ENCODE measurements at regions of chr6 and their contacts with region 1.

Region 1: GRCh38 chr6:53651764-53652401 is 13.7 kb downstream of the KLHL31 start:
- DNase-seq: peak; percentile 92 to 94
- H3K4me3 ChIP-seq: peak overlapping the region; percentile 53
- H3K4me3 Mint-ChIP-seq: peak overlapping the region; percentile 99
- H3K27ac Mint-ChIP-seq: peak overlapping the region; percentile 99
- H3K4me1 ChIP-seq: peaks cover 6% of the 10 kb centered on the region; the same call in 1 of the 2 replicates
- H3K4me1 Mint-ChIP-seq: peaks cover 10% of the 10 kb centered on the region
- H3K27me3 ChIP-seq: no peaks in the 10 kb centered on the region
- H3K27me3 Mint-ChIP-seq: no peaks in the 10 kb centered on the region
- CTCF ChIP-seq: peak; percentile 49 to 54

Region 2: DNA sequence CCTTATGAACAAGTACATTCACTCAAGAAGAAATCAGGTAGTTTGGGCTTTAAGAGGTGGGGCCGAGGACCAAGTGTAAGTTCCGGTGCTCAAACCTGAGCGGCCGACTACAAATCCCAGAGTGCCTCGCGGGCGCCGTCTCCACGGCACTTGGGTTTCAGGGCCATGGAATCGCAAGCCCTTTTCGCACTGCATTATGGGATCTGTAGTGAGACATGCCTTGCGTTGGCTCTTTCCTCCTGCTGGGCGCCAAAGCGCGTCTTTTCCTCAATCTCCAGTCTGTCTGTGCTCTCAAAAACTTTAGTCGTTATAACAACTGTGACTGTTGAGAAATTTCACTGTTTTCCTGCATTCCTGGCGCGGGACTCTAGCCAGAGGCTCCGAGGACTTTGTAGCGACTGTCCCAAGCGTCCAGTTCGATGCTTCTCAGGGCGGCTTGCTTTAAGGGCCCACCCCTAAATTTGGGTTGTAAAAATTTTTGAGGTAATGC is 587.1 kb before region 1 on chr6:
- CTCF ChIA-PET with region 1: no interaction called
- POLR2A ChIA-PET with region 1: no interaction called
- intact Hi-C with region 1: no loop called
- DNase-seq: peak; percentile 94 to 95
- H3K4me3 ChIP-seq: peak overlapping the region; percentile 76
- H3K4me3 Mint-ChIP-seq: peak overlapping the region; percentile 97
- H3K27ac Mint-ChIP-seq: peak overlapping the region; percentile 87
- H3K4me1 ChIP-seq: 0 out of 2 replicates have a peak, but pooled peaks cover 7% of the 10 kb centered on the region
- H3K4me1 Mint-ChIP-seq: peaks cover 24% of the 10 kb centered on the region
- H3K27me3 ChIP-seq: no peaks in the 10 kb centered on the region
- H3K27me3 Mint-ChIP-seq: no peaks in the 10 kb centered on the region
- CTCF ChIP-seq: peak in 1 of 2 experiments; percentile 12

Region 3: DNA sequence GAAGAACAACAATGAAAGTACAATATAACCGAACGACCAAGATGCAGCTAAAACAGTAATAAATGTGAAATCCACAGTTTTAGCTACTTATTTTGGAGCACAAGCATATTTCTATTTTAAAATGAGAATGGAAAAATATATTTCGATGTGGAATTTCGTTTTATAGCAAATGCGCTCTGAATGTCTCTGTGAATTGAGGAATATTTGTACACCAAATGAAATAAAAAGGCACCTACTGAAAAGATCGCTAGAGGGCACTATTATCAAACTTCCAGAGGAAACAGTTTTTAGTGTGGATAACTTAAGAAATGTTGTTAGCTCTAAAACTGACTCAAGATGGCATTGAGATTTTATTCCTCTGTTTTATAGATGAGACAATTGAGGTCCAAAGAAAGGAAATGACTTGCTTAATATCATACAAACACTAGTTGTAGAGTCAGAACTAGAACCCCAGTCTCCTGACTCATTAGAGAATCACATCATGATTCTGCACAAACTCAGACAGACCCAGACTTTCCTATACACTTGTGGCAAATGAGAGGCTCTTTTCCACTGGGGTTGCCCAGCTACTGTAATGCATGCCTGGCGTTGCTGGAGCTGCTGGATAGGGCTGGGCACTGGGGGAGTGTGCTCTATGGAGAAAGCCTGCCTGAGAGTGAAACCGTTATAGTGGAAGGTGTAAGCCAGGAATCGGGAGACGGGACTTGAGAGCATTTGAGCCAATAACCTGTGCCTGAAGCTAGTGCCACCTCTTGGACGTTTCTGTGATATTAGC is 158.8 kb before region 1 on chr6:
- CTCF ChIA-PET with region 1: interaction called, 29 read pairs
- POLR2A ChIA-PET with region 1: interaction called, 6 read pairs
- intact Hi-C with region 1: loop called (anchors 1 kb)
- DNase-seq: peak; percentile 34 to 50
- H3K4me3 ChIP-seq: no peak overlapping the region
- H3K4me3 Mint-ChIP-seq: no peak overlapping the region
- H3K27ac Mint-ChIP-seq: no peak overlapping the region
- H3K4me1 ChIP-seq: no peaks in the 10 kb centered on the region
- H3K4me1 Mint-ChIP-seq: peaks cover under 1% of the 10 kb centered on the region
- H3K27me3 ChIP-seq: no peaks in the 10 kb centered on the region
- H3K27me3 Mint-ChIP-seq: no peaks in the 10 kb centered on the region
- CTCF ChIP-seq: peak; percentile 48 to 65

Region 4: GRCh38 chr6:53615633-53616449 is 36.0 kb before region 1 on chr6:
- CTCF ChIA-PET with region 1: interaction called, 8 read pairs
- POLR2A ChIA-PET with region 1: interaction called, 7 read pairs
- intact Hi-C with region 1: loop called (anchors 1 kb)
- DNase-seq: peak; percentile 77 to 79
- H3K4me3 ChIP-seq: peak overlapping the region; percentile 11; the same call in 1 of the 2 replicates
- H3K4me3 Mint-ChIP-seq: peak overlapping the region; percentile 71
- H3K27ac Mint-ChIP-seq: peak overlapping the region; percentile 98
- H3K4me1 ChIP-seq: peaks cover 41% of the 10 kb centered on the region
- H3K4me1 Mint-ChIP-seq: peaks cover 54% of the 10 kb centered on the region
- H3K27me3 ChIP-seq: no peaks in the 10 kb centered on the region
- H3K27me3 Mint-ChIP-seq: no peaks in the 10 kb centered on the region
- CTCF ChIP-seq: no peak

Region 5: GRCh38 chr6:53679446-53679933 is 27.6 kb after region 1 on chr6:
- CTCF ChIA-PET with region 1: interaction called, 11 read pairs
- POLR2A ChIA-PET with region 1: no interaction called
- intact Hi-C with region 1: no loop called
- DNase-seq: peak in 1 of 2 experiments; percentile 41
- H3K4me3 ChIP-seq: no peak overlapping the region
- H3K4me3 Mint-ChIP-seq: no peak overlapping the region
- H3K27ac Mint-ChIP-seq: peak overlapping the region; percentile 39
- H3K4me1 ChIP-seq: no peaks in the 10 kb centered on the region
- H3K4me1 Mint-ChIP-seq: no peaks in the 10 kb centered on the region
- H3K27me3 ChIP-seq: no peaks in the 10 kb centered on the region
- H3K27me3 Mint-ChIP-seq: no peaks in the 10 kb centered on the region
- CTCF ChIP-seq: peak; percentile 40 to 57

Region 6: GRCh38 chr6:53728570-53729194 is 76.8 kb after region 1 on chr6:
- CTCF ChIA-PET with region 1: interaction called, 5 read pairs
- POLR2A ChIA-PET with region 1: no interaction called
- intact Hi-C with region 1: loop called (anchors 1 kb)
- DNase-seq: peak in 1 of 2 experiments; percentile 52
- H3K4me3 ChIP-seq: no peak overlapping the region
- H3K4me3 Mint-ChIP-seq: no peak overlapping the region
- H3K27ac Mint-ChIP-seq: peak overlapping the region; percentile 49
- H3K4me1 ChIP-seq: peaks cover 58% of the 10 kb centered on the region
- H3K4me1 Mint-ChIP-seq: peaks cover 45% of the 10 kb centered on the region
- H3K27me3 ChIP-seq: no peaks in the 10 kb centered on the region
- H3K27me3 Mint-ChIP-seq: no peaks in the 10 kb centered on the region
- CTCF ChIP-seq: peak; percentile 69 to 75

Measured in Caco-2 (cell line).